Panc1 (cell line): ENCODE measurements at regions of chr12 and their contacts with region 1.

Region 1: GRCh38 chr12:34292736-34293625 is 270.7 kb downstream of the ALG10 start:
- DNase-seq: peak; percentile 20
- ATAC-seq: peak; percentile 82
- H3K4me3 ChIP-seq: 0 out of 4 replicates have a peak overlapping the region, but pooled peaks of 1 of the 2 experiments have one; percentile 16
- H3K27ac ChIP-seq: no peak overlapping the region
- H3K4me1 ChIP-seq: peaks cover 20% of the 10 kb centered on the region
- H3K27me3 ChIP-seq: no peaks in the 10 kb centered on the region; the same call in 1 of the 2 replicates
- CTCF ChIP-seq: peak; percentile 81

Region 2: DNA sequence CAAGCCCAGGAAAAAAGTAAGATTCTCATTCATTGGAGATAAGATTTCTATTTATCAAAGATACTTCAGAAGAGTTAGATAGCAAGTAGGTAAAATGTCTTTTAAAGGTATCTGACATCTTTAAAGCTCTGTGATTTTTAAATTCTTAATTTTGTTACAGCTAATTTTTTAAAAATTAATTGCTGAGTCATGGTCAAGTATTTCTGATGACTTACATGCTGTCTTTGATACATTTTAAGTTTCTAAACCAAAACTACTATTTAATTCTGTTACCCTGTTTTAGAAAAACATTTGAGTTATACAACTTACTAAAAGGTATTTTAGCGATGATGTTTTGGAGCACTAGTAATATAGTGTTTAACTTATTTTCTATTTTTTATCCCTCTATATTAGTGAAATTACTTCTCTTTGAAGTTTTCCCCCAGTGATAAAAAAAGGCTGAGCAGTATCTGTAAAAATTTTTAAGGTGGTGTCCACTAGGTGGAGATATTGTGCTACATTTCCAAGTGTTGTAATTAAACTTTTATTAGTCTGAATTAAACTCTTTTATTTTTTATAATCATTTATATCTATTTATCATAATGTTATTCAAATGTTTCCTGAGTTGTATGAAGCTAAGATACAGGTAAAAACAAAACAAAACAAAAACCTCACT is 259.2 kb before region 1 on chr12:
- CTCF ChIA-PET with region 1: no interaction called
- POLR2A ChIA-PET with region 1: no interaction called
- in situ Hi-C with region 1: no loop called
- intact Hi-C with region 1: loop called (anchors 5 kb)
- DNase-seq: no peak
- ATAC-seq: no peak
- H3K4me3 ChIP-seq: no peak overlapping the region
- H3K27ac ChIP-seq: no peak overlapping the region
- H3K4me1 ChIP-seq: no peaks in the 10 kb centered on the region
- H3K27me3 ChIP-seq: no peaks in the 10 kb centered on the region
- CTCF ChIP-seq: peak; percentile 28; the same call in 1 of the 2 replicates

Region 3: GRCh38 chr12:34097213-34097612 is 195.8 kb before region 1 on chr12:
- CTCF ChIA-PET with region 1: no interaction called
- POLR2A ChIA-PET with region 1: no interaction called
- in situ Hi-C with region 1: no loop called
- intact Hi-C with region 1: no loop called
- DNase-seq: no peak
- ATAC-seq: no peak
- H3K4me3 ChIP-seq: no peak overlapping the region
- H3K27ac ChIP-seq: no peak overlapping the region
- H3K4me1 ChIP-seq: no peaks in the 10 kb centered on the region
- H3K27me3 ChIP-seq: peaks cover 2% of the 10 kb centered on the region; the same call in 1 of the 2 replicates
- CTCF ChIP-seq: no peak

Region 4: GRCh38 chr12:34126239-34126641 is 166.7 kb before region 1 on chr12:
- CTCF ChIA-PET with region 1: no interaction called
- POLR2A ChIA-PET with region 1: no interaction called
- in situ Hi-C with region 1: no loop called
- intact Hi-C with region 1: loop called (anchors 2 kb)
- DNase-seq: no peak
- ATAC-seq: peak; percentile 66; the same call in 1 of the 2 replicates
- H3K4me3 ChIP-seq: peak overlapping the region; percentile 10 to 46
- H3K27ac ChIP-seq: peak overlapping the region; percentile 1; the same call in 1 of the 2 replicates
- H3K4me1 ChIP-seq: no peaks in the 10 kb centered on the region
- H3K27me3 ChIP-seq: no peaks in the 10 kb centered on the region
- CTCF ChIP-seq: no peak

Region 5: DNA sequence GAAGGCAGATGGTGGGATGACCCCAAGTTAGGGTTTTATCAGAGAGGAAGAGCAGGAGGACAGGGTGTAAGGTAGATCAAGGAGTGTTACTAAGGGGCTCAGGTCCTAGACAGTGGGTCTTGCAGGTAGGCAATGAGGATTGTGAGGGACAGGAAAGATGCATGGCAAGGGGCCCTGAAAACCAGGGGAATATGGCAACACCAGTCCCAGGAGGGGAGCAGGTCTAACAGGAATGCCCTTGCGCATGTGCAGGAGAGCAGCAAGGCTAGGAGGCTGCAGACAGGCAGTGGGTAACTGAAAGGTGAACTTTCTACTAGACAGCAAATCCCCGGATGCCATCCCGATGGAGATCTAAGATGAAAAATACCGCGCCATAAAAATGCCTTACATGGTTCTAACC is 59.4 kb before region 1 on chr12:
- CTCF ChIA-PET with region 1: no interaction called
- POLR2A ChIA-PET with region 1: no interaction called
- in situ Hi-C with region 1: no loop called
- intact Hi-C with region 1: loop called (anchors 10 kb)
- DNase-seq: no peak
- ATAC-seq: no peak
- H3K4me3 ChIP-seq: no peak overlapping the region
- H3K27ac ChIP-seq: no peak overlapping the region
- H3K4me1 ChIP-seq: no peaks in the 10 kb centered on the region
- H3K27me3 ChIP-seq: no peaks in the 10 kb centered on the region
- CTCF ChIP-seq: no peak